Aorta (tissue), 5 donors: ENCODE measurements at regions of chr10 and their contacts with region 1.

Region 1: GRCh38 chr10:12484941-12485805 is 135.8 kb downstream of the CAMK1D start:
- DNase-seq: peak; percentile 76 to 84
- ATAC-seq: peak; percentile 83
- H3K4me3 ChIP-seq: no peak overlapping the region
- H3K27ac ChIP-seq: peak overlapping the region; percentile 46 to 76
- H3K4me1 ChIP-seq: peaks cover 0 to 2% of the 10 kb centered on the region in 2 donors
- H3K27me3 ChIP-seq: no peaks in the 10 kb centered on the region

Region 2: GRCh38 chr10:12390733-12391132 is 94.4 kb before region 1 on chr10:
- intact Hi-C with region 1: loop called in 1 of 2 experiments (anchors 5 kb)
- DNase-seq: peak in 1 of 2 donors; percentile 82
- ATAC-seq: peak; percentile 48
- H3K4me3 ChIP-seq: no peak overlapping the region
- H3K27ac ChIP-seq: peak overlapping the region in 1 of 2 donors; percentile 76
- H3K4me1 ChIP-seq: no peaks in the 10 kb centered on the region
- H3K27me3 ChIP-seq: no peaks in the 10 kb centered on the region